MCF 10A (cell line): ENCODE measurements at regions of chr6 and their contacts with region 1.

Region 1: DNA sequence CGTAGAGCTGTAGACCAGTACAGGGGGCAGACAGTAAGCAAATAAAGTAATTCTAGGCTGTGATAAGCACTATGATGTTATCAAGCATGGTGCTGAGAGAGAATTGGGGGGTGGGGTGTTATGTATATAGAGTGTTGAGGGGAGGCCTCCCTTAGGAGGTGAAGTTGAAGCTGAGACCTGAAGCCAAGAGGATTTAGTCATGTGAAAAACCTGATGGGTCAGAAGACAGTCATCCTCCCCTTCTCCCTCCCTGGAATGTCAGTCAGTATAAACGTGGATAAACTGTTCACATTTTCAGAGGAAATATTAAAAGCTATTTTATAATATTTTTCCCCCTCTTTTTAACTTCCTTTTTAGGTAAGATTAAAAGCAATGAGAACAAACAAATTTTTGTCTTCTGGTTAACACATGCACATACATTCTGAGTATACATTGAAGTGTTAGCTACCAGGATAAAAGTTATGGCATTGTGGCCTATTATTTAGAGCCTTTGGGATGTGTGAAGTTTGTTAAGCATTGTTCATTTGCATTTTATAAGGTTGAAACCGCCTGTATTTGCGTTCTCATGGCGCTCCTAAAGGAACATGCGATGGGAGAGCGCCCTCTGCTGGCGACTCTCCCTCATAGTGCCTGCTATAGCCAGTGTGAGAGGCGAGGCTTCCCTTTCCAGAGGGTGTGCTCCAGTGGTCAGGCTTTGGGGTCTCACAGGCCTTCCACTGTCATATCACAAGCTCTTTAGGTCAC is 35.4 kb upstream of the MAPK13 start:
- DNase-seq: peak; percentile 81
- H3K4me3 Mint-ChIP-seq: no peak overlapping the region
- H3K27ac Mint-ChIP-seq: peak overlapping the region; percentile 4
- H3K4me1 Mint-ChIP-seq: peaks cover 10% of the 10 kb centered on the region
- H3K27me3 Mint-ChIP-seq: no peaks in the 10 kb centered on the region
- CTCF ChIP-seq: peak; percentile 94

Region 2: DNA sequence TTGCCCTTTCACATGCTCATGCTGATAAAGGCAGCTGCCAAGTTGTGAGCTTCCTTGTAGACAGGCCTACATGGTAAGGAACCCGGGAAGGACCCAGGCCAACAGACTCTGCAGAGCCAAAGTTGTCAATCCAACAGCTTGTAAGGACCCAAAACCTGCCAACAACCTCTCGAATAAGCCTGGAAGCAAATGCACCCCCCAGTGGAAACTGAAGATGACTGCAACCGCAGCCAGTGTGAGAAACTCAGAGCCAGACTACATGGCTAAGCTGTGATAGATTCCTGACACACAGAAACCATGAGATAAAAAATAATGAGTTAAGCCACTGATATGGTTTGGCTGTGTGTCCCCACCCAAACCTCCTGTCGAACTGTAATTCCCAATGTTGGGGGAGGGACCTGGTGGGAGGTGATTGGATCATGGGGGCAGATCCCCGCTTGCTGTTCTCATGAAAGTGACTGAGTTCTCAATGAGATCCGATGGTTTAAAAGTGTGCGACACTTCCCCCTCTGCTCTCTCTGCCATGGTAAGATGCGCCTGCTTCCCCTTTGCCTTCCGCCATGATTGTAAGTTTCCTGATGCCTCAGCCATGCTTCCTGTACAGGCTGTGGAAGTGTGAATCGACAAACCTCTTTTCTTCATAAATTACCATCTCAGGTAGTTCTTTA is 337.3 kb before region 1 on chr6:
- CTCF ChIA-PET with region 1: interaction called, 9 read pairs
- POLR2A ChIA-PET with region 1: no interaction called
- intact Hi-C with region 1: loop called (anchors 10 kb)
- DNase-seq: peak; percentile 57
- H3K4me3 Mint-ChIP-seq: no peak overlapping the region
- H3K27ac Mint-ChIP-seq: no peak overlapping the region
- H3K4me1 Mint-ChIP-seq: no peaks in the 10 kb centered on the region
- H3K27me3 Mint-ChIP-seq: peaks cover 30% of the 10 kb centered on the region
- CTCF ChIP-seq: peak; percentile 21

Region 3: GRCh38 chr6:36020154-36020553 is 74.8 kb before region 1 on chr6:
- CTCF ChIA-PET with region 1: interaction called, 134 read pairs
- POLR2A ChIA-PET with region 1: no interaction called
- intact Hi-C with region 1: no loop called
- DNase-seq: peak; percentile 9
- H3K4me3 Mint-ChIP-seq: no peak overlapping the region
- H3K27ac Mint-ChIP-seq: no peak overlapping the region
- H3K4me1 Mint-ChIP-seq: no peaks in the 10 kb centered on the region
- H3K27me3 Mint-ChIP-seq: no peaks in the 10 kb centered on the region
- CTCF ChIP-seq: no peak

Region 4: DNA sequence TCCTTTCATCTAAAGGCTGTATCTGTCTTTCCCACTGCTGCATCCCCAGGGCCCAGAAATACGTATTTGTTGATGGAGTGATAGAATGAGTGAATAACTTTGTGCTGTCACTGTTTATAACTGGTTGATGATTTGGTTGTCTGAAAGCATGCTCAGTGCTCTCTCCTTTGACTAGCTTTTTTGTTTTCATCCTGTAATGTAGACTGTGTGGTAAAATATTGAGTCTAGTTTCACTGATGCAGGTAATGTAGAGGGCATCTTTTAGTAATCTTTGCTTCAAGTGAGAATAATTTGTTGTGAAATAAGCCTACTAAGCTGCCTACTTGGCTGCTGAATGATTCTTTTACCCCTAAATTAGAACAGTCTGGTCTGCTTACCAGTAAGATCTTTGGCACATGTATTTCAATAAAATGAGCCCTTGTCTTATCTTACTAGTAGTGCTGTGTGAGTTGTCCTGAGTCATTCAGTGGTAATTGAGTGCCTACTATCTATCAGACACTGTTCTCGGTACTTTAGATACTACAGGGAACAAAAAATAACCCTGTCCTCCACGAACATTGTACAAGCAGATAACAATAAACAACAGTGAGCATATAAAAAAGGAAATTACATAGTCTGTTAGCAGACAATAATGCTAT is 27.4 kb before region 1 on chr6:
- CTCF ChIA-PET with region 1: interaction called, 10 read pairs
- POLR2A ChIA-PET with region 1: interaction called, 3 read pairs
- intact Hi-C with region 1: no loop called
- DNase-seq: no peak
- H3K4me3 Mint-ChIP-seq: no peak overlapping the region
- H3K27ac Mint-ChIP-seq: peak overlapping the region; percentile 28
- H3K4me1 Mint-ChIP-seq: peaks cover 26% of the 10 kb centered on the region
- H3K27me3 Mint-ChIP-seq: no peaks in the 10 kb centered on the region
- CTCF ChIP-seq: no peak

Region 5: DNA sequence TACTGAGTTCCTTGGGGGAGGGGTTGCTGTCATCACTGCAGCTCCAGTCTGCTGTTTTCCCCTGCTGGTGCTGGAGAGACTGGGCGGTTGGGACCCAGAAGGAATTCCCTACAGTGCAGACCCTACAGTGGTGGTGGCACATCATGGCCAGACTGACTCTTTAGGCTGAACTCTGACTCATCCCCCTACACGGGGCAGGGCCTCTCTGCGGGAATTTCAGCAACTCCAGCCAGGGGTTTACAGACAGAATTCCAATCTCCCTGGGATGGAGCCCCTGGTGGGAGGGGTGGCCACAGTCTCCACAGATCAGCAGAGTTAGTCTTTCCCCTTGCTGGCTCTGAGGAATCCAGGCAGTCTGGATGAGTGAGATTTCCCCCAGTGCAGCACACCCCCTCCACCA is 11.5 kb before region 1 on chr6:
- CTCF ChIA-PET with region 1: interaction called, 56 read pairs
- POLR2A ChIA-PET with region 1: interaction called, 7 read pairs
- intact Hi-C with region 1: no loop called
- DNase-seq: no peak
- H3K4me3 Mint-ChIP-seq: no peak overlapping the region
- H3K27ac Mint-ChIP-seq: no peak overlapping the region
- H3K4me1 Mint-ChIP-seq: no peaks in the 10 kb centered on the region
- H3K27me3 Mint-ChIP-seq: no peaks in the 10 kb centered on the region
- CTCF ChIP-seq: no peak

Region 6: DNA sequence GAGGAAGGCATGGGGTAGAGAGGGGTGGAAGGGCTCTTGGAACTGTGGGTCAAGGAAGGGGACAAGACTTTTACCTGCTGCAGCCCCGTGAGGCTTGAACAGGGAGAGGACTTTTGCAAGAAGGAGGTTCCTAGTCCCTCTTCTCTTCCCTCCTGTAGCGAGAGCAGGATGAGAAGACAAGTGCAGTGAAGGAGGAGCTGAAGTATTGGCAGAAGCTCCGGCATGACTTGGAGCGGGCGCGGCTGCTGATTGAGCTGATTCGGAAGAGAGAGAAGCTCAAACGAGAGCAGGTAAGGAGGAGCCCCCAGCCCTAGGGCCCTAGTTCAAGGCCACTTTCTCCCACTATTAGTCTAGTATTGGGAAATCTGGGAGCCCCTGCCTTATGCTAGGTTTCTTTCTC is 112.2 kb after region 1 on chr6:
- CTCF ChIA-PET with region 1: interaction called, 11 read pairs
- POLR2A ChIA-PET with region 1: no interaction called
- intact Hi-C with region 1: no loop called
- DNase-seq: no peak
- H3K4me3 Mint-ChIP-seq: no peak overlapping the region
- H3K27ac Mint-ChIP-seq: no peak overlapping the region
- H3K4me1 Mint-ChIP-seq: no peaks in the 10 kb centered on the region
- H3K27me3 Mint-ChIP-seq: no peaks in the 10 kb centered on the region
- CTCF ChIP-seq: no peak

Region 7: GRCh38 chr6:36276581-36277536 is 181.9 kb after region 1 on chr6:
- CTCF ChIA-PET with region 1: no interaction called
- POLR2A ChIA-PET with region 1: no interaction called
- intact Hi-C with region 1: no loop called
- DNase-seq: no peak
- H3K4me3 Mint-ChIP-seq: no peak overlapping the region
- H3K27ac Mint-ChIP-seq: no peak overlapping the region
- H3K4me1 Mint-ChIP-seq: no peaks in the 10 kb centered on the region
- H3K27me3 Mint-ChIP-seq: peaks cover 74% of the 10 kb centered on the region
- CTCF ChIP-seq: no peak

Region 8: DNA sequence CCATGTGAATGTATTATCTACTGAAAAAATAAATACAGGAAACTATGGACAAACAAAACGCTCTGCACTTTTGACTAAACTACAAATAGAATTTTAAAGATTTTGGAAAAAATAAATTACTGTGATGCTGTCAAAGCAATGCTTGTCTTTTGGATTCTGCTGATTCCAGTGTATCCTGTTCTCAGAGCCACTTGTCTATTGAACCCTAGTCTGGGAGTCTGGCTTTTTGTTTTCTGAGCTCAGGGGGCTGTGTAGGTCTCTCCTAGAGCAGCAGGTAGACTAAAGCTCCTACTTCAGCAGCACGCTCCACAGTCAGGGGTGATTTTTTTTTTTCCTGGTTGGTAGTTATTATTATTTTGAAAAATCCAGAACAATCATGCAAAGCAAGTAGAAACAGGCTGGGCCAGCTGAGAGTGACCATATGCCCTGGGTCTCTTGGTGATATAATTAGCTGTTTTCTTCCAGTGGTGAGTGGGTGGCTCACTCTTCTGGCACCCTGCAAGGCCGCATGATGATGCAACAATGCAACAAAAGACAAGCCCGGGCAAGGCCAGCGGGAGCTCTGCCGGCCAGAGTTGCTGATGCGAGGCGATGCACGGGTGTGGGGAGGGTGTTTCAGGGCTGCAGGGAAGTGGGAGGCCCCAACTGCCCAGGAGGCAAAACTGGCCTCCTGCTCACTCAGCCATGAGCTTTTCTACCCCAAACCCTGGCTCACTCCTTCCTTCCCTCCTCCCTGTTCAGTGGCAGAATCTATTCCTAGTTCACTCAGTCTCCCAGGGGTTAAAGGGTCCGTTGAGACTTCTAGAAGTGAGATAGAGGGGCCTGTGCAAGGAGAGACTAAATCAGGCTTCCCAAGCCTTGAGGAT is 572.0 kb after region 1 on chr6:
- CTCF ChIA-PET with region 1: no interaction called
- POLR2A ChIA-PET with region 1: no interaction called
- intact Hi-C with region 1: no loop called
- DNase-seq: peak; percentile 98
- H3K4me3 Mint-ChIP-seq: no peak overlapping the region
- H3K27ac Mint-ChIP-seq: peak overlapping the region; percentile 91
- H3K4me1 Mint-ChIP-seq: peaks cover 31% of the 10 kb centered on the region
- H3K27me3 Mint-ChIP-seq: no peaks in the 10 kb centered on the region
- CTCF ChIP-seq: no peak